ENCODE measurements at regions of chr1 and their contacts with region 1.

Region 1: GRCh38 chr1:28088168-28088961 is at the start of gene EYA3:
- DNase-seq: peak; percentile 99 to 100 (median 100)
- ATAC-seq: peak; percentile 94
- H3K4me3 ChIP-seq: peak within 1 kb of the TSS; percentile 76
- H3K27ac ChIP-seq: peak within 1 kb of the TSS; percentile 90
- H3K4me1 ChIP-seq: peaks cover 12 to 14% of the 10 kb centered on the region in 2 experiments
- H3K27me3 ChIP-seq: no peaks in the 10 kb centered on the region
- CTCF ChIP-seq: no peak
- EP300 ChIP-seq: peak; percentile 11; the same call in 1 of the 2 replicates
- POLR2A ChIP-seq: peak; percentile 97
- RAD21 ChIP-seq: no peak
- polyA plus RNA-seq, gene EYA3: 29.4 to 43.6 TPM

Region 2: DNA sequence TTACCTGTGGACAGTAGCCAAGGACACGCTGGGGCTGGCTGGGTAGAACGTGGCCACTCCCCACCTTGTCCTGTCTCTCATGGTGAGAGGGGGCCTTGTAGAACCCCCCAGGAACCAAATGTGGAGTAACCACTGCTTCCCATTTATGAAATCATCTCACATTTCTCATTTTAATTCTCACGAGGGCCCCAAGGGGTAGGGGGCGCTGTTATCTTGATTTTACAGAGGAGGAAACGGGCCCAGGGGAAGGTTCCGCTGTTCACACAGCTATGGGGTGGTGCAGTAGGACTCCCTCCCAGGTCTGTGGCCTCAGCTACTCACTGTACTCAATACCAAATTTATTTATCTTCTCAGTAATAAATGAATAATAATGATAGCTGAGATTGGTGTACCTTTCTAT is 148.1 kb before region 1 on chr1:
- CTCF ChIA-PET with region 1: no interaction called
- POLR2A ChIA-PET with region 1: no interaction called
- in situ Hi-C with region 1: no loop called
- intact Hi-C with region 1: loop called (anchors 1 kb)
- DNase-seq: peak; percentile 74 to 83 (median 80)
- ATAC-seq: peak; percentile 76
- H3K4me3 ChIP-seq: no peak overlapping the region
- H3K27ac ChIP-seq: no peak overlapping the region
- H3K4me1 ChIP-seq: peaks cover 15 to 18% of the 10 kb centered on the region in 2 experiments
- H3K27me3 ChIP-seq: no peaks in the 10 kb centered on the region
- CTCF ChIP-seq: peak; percentile 53 to 74 (median 69)
- EP300 ChIP-seq: no peak
- POLR2A ChIP-seq: no peak
- RAD21 ChIP-seq: peak in 1 of 2 experiments; percentile 57; a peak in 3 of 4 replicates

Region 3: GRCh38 chr1:28036431-28036830 is 51.9 kb before region 1 on chr1:
- CTCF ChIA-PET with region 1: no interaction called
- POLR2A ChIA-PET with region 1: interaction called, 3 read pairs
- in situ Hi-C with region 1: no loop called
- intact Hi-C with region 1: loop called (anchors 5 kb)
- DNase-seq: no peak
- ATAC-seq: no peak
- H3K4me3 ChIP-seq: no peak overlapping the region
- H3K27ac ChIP-seq: no peak overlapping the region
- H3K4me1 ChIP-seq: peaks cover 0 to 2% of the 10 kb centered on the region in 2 experiments; a peak in 1 of 5 replicates
- H3K27me3 ChIP-seq: no peaks in the 10 kb centered on the region
- CTCF ChIP-seq: peak in 1 of 3 experiments; percentile 43; a peak in 2 of 6 replicates
- EP300 ChIP-seq: no peak
- POLR2A ChIP-seq: no peak
- RAD21 ChIP-seq: peak in 1 of 2 experiments; percentile 36; a peak in 2 of 4 replicates

Region 4: DNA sequence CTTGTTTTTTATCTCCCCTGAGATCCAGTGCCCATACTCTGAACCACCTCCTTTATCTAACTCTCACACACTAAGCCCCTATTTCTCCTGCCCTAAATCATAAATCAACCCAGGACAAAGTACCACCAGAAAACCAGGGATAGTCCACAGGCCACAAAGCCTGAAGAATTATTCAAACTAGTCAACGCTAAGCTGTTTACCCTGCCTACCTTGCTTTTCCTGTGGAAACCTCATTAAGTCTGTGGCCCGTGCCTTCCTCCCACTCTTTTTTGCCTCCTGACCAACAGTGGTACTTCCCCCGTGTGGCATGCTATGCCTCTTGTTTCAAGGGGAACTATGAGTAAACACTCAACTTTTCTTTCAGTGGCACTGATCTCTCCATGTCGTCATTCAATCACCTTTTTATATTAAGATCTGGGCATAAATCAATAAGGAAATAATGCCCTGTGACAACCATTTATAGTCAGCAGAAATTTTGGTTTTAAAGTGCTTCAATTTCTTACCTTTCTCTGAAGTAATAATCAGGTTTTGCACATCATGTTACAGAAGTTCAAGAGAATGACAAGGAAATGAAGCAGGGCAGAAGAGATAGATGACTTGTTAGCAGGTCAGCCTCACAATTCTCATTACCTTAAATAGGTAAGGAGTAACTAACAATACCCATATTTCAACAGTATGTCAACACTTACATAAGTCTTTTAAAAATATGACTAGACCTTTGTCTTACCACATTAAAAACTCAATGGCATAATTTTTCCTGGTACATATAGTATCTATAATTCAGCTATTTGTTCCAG is 32.0 kb before region 1 on chr1:
- CTCF ChIA-PET with region 1: no interaction called
- POLR2A ChIA-PET with region 1: interaction called, 10 read pairs
- in situ Hi-C with region 1: no loop called
- intact Hi-C with region 1: no loop called
- DNase-seq: peak in 1 of 4 experiments; percentile 52
- ATAC-seq: peak; percentile 52
- H3K4me3 ChIP-seq: no peak overlapping the region
- H3K27ac ChIP-seq: peak overlapping the region; percentile 41
- H3K4me1 ChIP-seq: peaks cover 8 to 39% of the 10 kb centered on the region in 2 experiments; a peak in 4 of 5 replicates
- H3K27me3 ChIP-seq: no peaks in the 10 kb centered on the region
- CTCF ChIP-seq: no peak
- EP300 ChIP-seq: peak; percentile 30; the same call in 1 of the 2 replicates
- POLR2A ChIP-seq: no peak
- RAD21 ChIP-seq: no peak

Region 5: GRCh38 chr1:28112388-28113241 is 24.2 kb after region 1 on chr1:
- CTCF ChIA-PET with region 1: no interaction called
- POLR2A ChIA-PET with region 1: interaction called, 10 read pairs
- in situ Hi-C with region 1: no loop called
- intact Hi-C with region 1: loop called (anchors 1 kb)
- DNase-seq: peak; percentile 57 to 83 (median 64)
- ATAC-seq: peak; percentile 94
- H3K4me3 ChIP-seq: no peak overlapping the region
- H3K27ac ChIP-seq: peak overlapping the region; percentile 59
- H3K4me1 ChIP-seq: peaks cover 4 to 18% of the 10 kb centered on the region in 2 experiments; a peak in 3 of 5 replicates
- H3K27me3 ChIP-seq: no peaks in the 10 kb centered on the region
- CTCF ChIP-seq: peak in 2 of 3 experiments; percentile 81 to 89; a peak in 3 of 6 replicates
- EP300 ChIP-seq: no peak; the same call in 1 of the 2 replicates
- POLR2A ChIP-seq: no peak
- RAD21 ChIP-seq: peak in 1 of 2 experiments; percentile 81; a peak in 3 of 4 replicates

Region 6: GRCh38 chr1:28208818-28209441 is 120.6 kb after region 1 on chr1:
- CTCF ChIA-PET with region 1: interaction called, 81 read pairs
- POLR2A ChIA-PET with region 1: interaction called, 13 read pairs
- in situ Hi-C with region 1: loop called (anchors 5 kb)
- intact Hi-C with region 1: loop called (anchors 1 kb)
- DNase-seq: peak; percentile 49 to 75 (median 62)
- ATAC-seq: peak; percentile 98
- H3K4me3 ChIP-seq: no peak overlapping the region
- H3K27ac ChIP-seq: 0 out of 3 replicates have a peak overlapping the region, but pooled peaks have one; percentile 5
- H3K4me1 ChIP-seq: peaks cover 0 to 2% of the 10 kb centered on the region in 2 experiments; a peak in 1 of 5 replicates
- H3K27me3 ChIP-seq: no peaks in the 10 kb centered on the region
- CTCF ChIP-seq: peak; percentile 77 to 93 (median 80)
- EP300 ChIP-seq: no peak
- POLR2A ChIP-seq: no peak
- RAD21 ChIP-seq: peak; percentile 91 to 97

Region 7: DNA sequence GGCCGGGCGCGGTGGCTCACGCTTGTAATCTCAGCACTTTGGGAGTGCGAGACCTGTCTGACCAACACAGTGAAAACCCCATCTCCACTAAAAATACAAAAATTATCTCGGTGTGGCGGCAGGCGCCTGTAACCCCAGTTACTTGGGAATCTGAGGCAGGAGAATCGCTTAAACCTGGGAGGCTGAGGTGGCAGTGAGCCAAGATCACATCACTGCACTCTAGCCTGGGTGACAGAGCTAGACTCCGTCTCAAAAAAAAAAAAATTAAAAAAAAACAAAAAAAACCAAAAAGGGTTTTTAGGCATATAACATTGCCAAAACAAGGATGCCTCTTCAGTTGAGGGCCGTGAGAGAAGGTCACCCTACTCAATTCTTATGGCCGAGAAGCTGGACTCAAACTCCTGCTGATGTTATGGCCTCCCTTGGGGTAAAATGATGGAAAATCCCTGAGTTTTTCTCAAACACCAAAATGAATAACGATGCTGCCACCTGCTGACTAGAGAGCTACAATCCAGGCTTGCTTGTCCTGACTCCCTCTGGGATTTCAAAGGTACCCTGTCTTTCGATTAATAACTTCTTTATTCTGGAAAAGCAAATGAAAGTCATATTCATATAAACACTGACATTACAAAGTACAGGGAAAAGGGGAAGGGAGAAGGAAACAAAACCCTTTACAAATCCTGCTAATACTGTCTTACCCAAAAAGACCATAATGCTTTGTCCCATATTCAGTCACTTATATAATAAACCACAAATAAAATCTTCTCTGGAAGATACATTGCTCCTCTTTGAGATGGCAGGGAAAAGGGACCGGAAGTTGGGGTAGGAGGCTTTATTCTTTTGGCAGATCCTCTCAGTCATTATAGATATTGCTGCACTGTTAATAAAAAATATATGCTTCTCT is 514.4 kb after region 1 on chr1:
- CTCF ChIA-PET with region 1: no interaction called
- POLR2A ChIA-PET with region 1: no interaction called
- in situ Hi-C with region 1: no loop called
- intact Hi-C with region 1: loop called (anchors 5 kb)
- DNase-seq: peak; percentile 67 to 86 (median 73)
- ATAC-seq: peak; percentile 91
- H3K4me3 ChIP-seq: no peak overlapping the region
- H3K27ac ChIP-seq: no peak overlapping the region
- H3K4me1 ChIP-seq: no peaks in the 10 kb centered on the region
- H3K27me3 ChIP-seq: no peaks in the 10 kb centered on the region
- CTCF ChIP-seq: peak; percentile 82 to 94 (median 86)
- EP300 ChIP-seq: no peak
- POLR2A ChIP-seq: no peak
- RAD21 ChIP-seq: peak; percentile 92 to 97